CD4-positive, alpha-beta memory T cell (primary cell): ENCODE measurements at regions of chr12 and their contacts with region 1.

Region 1: GRCh38 chr12:121839106-121839992 is 19.3 kb downstream of the HPD start:
- DNase-seq: peak; percentile 99 to 100 (median 99)
- H3K4me3 ChIP-seq: peak overlapping the region; percentile 70 to 95
- H3K4me3 Mint-ChIP-seq: peak overlapping the region; percentile 96 to 99 (median 99)
- H3K27ac ChIP-seq: peak overlapping the region; percentile 46
- H3K27ac Mint-ChIP-seq: peak overlapping the region; percentile 86 to 97 (median 93)
- H3K4me1 ChIP-seq: peaks cover 9% of the 10 kb centered on the region
- H3K4me1 Mint-ChIP-seq: peaks cover 10 to 23% (median 14%) of the 10 kb centered on the region in 4 donors
- H3K27me3 ChIP-seq: no peaks in the 10 kb centered on the region
- H3K27me3 Mint-ChIP-seq: no peaks in the 10 kb centered on the region

Region 2: DNA sequence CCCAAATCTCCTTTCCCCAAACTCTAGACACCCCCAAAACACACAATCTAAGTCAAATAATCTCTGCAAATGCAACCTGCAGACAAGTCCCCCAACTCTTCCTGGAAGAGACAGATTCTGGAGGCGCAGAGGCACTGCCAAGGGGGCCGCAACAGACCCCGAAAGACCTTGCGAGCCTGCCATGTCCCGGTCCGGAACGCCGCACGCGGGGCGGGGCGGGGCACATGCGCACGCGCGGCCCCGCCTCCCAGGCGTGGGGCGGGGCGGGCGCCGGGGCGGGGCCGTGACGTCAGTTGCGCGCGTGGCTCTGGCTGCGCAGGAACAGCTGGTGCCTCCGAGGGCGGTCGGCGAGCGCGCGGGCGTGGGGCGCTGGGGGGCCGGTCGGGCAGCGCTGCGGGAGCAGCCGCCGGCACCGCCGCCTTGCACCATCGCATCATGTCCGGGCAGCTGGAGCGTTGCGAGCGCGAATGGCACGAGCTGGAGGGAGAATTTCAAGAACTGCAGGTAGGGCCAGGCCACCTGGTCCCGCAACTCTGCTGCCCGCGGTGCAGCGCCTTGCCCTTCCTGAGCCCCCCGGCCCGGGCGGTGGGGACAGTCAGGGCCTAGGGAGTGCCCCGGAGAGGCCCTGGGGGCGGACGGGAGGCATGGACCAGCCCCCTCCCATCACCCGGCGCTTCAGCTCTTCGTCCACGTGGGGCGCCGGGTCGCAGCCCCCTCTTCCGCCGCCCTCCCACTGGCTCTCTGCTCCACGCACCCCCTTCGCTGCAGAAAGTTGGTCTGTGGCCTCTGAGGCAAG is 126.7 kb before region 1 on chr12 and contains the start of gene TMEM120B:
- CTCF ChIA-PET with region 1: no interaction called
- POLR2A ChIA-PET with region 1: no interaction called
- intact Hi-C with region 1: loop called (anchors 1 kb)
- DNase-seq: peak; percentile 78 to 89 (median 84)
- H3K4me3 ChIP-seq: peak within 1 kb of the TSS; percentile 57 to 93
- H3K4me3 Mint-ChIP-seq: peak within 1 kb of the TSS; percentile 91 to 98 (median 96)
- H3K27ac ChIP-seq: peak within 1 kb of the TSS; percentile 63
- H3K27ac Mint-ChIP-seq: peak within 1 kb of the TSS; percentile 85 to 97 (median 95)
- H3K4me1 ChIP-seq: peaks cover 16% of the 10 kb centered on the region
- H3K4me1 Mint-ChIP-seq: peaks cover 7 to 26% (median 17%) of the 10 kb centered on the region in 4 donors
- H3K27me3 ChIP-seq: no peaks in the 10 kb centered on the region
- H3K27me3 Mint-ChIP-seq: no peaks in the 10 kb centered on the region
- total RNA-seq, gene TMEM120B: 11.3 to 12.8 TPM

Region 3: GRCh38 chr12:121823101-121823726 is 16.1 kb before region 1 on chr12:
- CTCF ChIA-PET with region 1: interaction called, 7 read pairs
- POLR2A ChIA-PET with region 1: interaction called, 23 read pairs
- intact Hi-C with region 1: no loop called
- DNase-seq: no peak
- H3K4me3 ChIP-seq: no peak overlapping the region
- H3K4me3 Mint-ChIP-seq: no peak overlapping the region
- H3K27ac ChIP-seq: no peak overlapping the region
- H3K27ac Mint-ChIP-seq: peak overlapping the region in 2 of 7 donors; percentile 4 to 31
- H3K4me1 ChIP-seq: no peaks in the 10 kb centered on the region
- H3K4me1 Mint-ChIP-seq: peaks cover 0 to under 1% (median 0%) of the 10 kb centered on the region in 4 donors
- H3K27me3 ChIP-seq: no peaks in the 10 kb centered on the region
- H3K27me3 Mint-ChIP-seq: no peaks in the 10 kb centered on the region

Region 4: GRCh38 chr12:121888478-121889266 is 49.3 kb after region 1 on chr12 and contains the start of gene PSMD9:
- CTCF ChIA-PET with region 1: interaction called, 5 read pairs
- POLR2A ChIA-PET with region 1: interaction called, 14 read pairs
- intact Hi-C with region 1: loop called (anchors 1 kb)
- DNase-seq: peak; percentile 97 to 99 (median 98)
- H3K4me3 ChIP-seq: peak within 1 kb of the TSS; percentile 77 to 88
- H3K4me3 Mint-ChIP-seq: peak within 1 kb of the TSS; percentile 96 to 99 (median 98)
- H3K27ac ChIP-seq: peak within 1 kb of the TSS; percentile 91
- H3K27ac Mint-ChIP-seq: peak within 1 kb of the TSS; percentile 99 to 100 (median 99)
- H3K4me1 ChIP-seq: peaks cover 29% of the 10 kb centered on the region
- H3K4me1 Mint-ChIP-seq: peaks cover 19 to 43% (median 33%) of the 10 kb centered on the region in 4 donors
- H3K27me3 ChIP-seq: no peaks in the 10 kb centered on the region
- H3K27me3 Mint-ChIP-seq: peaks cover 0 to 3% of the 10 kb centered on the region in 2 donors
- total RNA-seq, gene PSMD9: 41.4 to 42.7 TPM

Region 5: DNA sequence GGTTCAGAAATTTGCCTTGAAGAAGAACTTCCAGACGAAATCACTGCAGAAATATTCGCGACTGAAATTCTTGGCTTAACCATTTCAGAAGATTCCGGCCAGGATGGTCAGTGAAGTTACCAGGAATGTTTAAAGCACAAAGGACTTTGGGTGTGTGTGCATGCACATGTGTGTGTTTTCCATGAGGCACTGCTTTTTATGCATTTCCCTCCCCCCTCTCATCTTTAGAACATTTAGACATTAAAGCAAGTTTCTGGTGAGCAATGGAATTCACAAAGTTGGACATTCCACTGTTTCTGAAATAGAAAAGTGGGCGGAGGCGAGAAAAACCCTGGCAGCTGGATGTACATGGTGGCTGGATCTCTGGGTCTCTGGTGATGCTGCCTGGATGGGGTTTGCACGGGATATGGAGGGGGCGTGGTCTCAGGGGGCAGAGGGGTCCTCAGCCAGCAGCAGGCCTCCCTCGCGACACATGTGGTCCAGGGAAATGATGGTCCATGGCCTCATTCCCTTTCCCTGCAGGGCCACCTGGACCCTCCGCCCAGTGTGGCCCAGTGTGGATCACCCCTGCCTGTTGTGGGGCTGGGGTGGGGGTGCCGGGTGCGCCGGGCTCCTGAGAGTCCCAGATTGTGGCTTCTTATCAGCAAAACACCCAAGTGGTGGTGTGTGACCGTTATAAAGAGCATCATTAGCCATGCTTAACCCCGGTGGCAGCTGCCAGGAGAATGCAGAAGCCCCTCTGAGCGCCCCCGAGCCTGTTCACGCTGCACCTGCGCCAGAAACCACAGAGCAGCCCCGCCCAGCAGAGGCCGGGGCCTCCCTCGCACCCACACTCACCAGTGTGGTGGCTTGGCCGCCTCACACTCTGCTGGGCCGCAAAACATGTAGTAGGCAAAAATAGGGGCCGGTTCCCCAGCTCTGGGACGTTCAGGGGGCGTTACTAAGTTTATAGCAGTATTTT is 164.6 kb after region 1 on chr12:
- CTCF ChIA-PET with region 1: no interaction called
- POLR2A ChIA-PET with region 1: no interaction called
- intact Hi-C with region 1: no loop called
- DNase-seq: no peak
- H3K4me3 ChIP-seq: no peak overlapping the region
- H3K4me3 Mint-ChIP-seq: peak overlapping the region in 3 of 8 donors; percentile 20 to 26 (median 20)
- H3K27ac ChIP-seq: no peak overlapping the region
- H3K27ac Mint-ChIP-seq: peak overlapping the region in 3 of 7 donors; percentile 29 to 74 (median 29)
- H3K4me1 ChIP-seq: peaks cover 40% of the 10 kb centered on the region
- H3K4me1 Mint-ChIP-seq: peaks cover 13 to 39% (median 18%) of the 10 kb centered on the region in 4 donors
- H3K27me3 ChIP-seq: no peaks in the 10 kb centered on the region
- H3K27me3 Mint-ChIP-seq: peaks cover 2 to 6% of the 10 kb centered on the region in 2 donors

Region 6: GRCh38 chr12:122306407-122306806 is 467.1 kb after region 1 on chr12:
- CTCF ChIA-PET with region 1: no interaction called
- POLR2A ChIA-PET with region 1: no interaction called
- intact Hi-C with region 1: no loop called
- DNase-seq: no peak
- H3K4me3 ChIP-seq: no peak overlapping the region
- H3K4me3 Mint-ChIP-seq: no peak overlapping the region
- H3K27ac ChIP-seq: no peak overlapping the region
- H3K27ac Mint-ChIP-seq: peak overlapping the region in 1 of 7 donors; percentile 18
- H3K4me1 ChIP-seq: no peaks in the 10 kb centered on the region
- H3K4me1 Mint-ChIP-seq: peaks cover 0 to 5% (median under 1%) of the 10 kb centered on the region in 4 donors
- H3K27me3 ChIP-seq: no peaks in the 10 kb centered on the region
- H3K27me3 Mint-ChIP-seq: no peaks in the 10 kb centered on the region